CD4-positive, alpha-beta T cell (primary cell): ENCODE measurements at regions of chr1 and their contacts with region 1.

Region 1: GRCh38 chr1:18926315-18927081 is 24.1 kb upstream of the ALDH4A1 start:
- DNase-seq: peak; percentile 61 to 94 (median 80)
- ATAC-seq: peak; percentile 82
- H3K4me3 ChIP-seq: peak overlapping the region; percentile 49
- H3K4me3 Mint-ChIP-seq: peak overlapping the region; percentile 52
- H3K27ac ChIP-seq: peak overlapping the region; percentile 87 to 91
- H3K27ac Mint-ChIP-seq: peak overlapping the region; percentile 83
- H3K4me1 ChIP-seq: peaks cover 97% of the 10 kb centered on the region
- H3K4me1 Mint-ChIP-seq: peaks cover 93% of the 10 kb centered on the region
- H3K27me3 ChIP-seq: no peaks in the 10 kb centered on the region
- H3K27me3 Mint-ChIP-seq: no peaks in the 10 kb centered on the region
- CTCF ChIP-seq: no peak

Region 2: DNA sequence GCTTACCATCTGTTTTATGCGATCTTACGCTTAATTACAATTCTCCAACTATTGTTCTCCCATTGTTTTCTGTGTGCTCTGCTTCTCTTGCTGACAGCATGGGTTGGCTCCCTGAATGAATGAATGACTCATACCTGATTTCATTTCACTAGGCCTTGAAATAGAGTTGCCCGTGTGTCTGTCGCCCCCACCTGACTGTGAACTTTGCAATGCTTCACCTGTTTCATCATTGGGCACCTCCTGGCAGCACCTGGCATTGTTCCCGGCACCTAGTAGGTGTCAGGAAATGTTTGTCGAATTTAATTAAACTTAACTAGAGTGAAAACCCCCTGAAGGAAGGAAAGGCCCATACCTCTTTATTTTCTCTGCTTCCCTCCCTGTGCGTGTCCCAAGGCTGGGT is 566.2 kb before region 1 on chr1:
- CTCF ChIA-PET with region 1: no interaction called
- POLR2A ChIA-PET with region 1: no interaction called
- intact Hi-C with region 1: no loop called
- DNase-seq: no peak
- ATAC-seq: no peak
- H3K4me3 ChIP-seq: no peak overlapping the region
- H3K4me3 Mint-ChIP-seq: no peak overlapping the region
- H3K27ac ChIP-seq: no peak overlapping the region
- H3K27ac Mint-ChIP-seq: no peak overlapping the region
- H3K4me1 ChIP-seq: no peaks in the 10 kb centered on the region
- H3K4me1 Mint-ChIP-seq: no peaks in the 10 kb centered on the region
- H3K27me3 ChIP-seq: peaks cover 9 to 16% of the 10 kb centered on the region in 2 experiments
- H3K27me3 Mint-ChIP-seq: peaks cover 72% of the 10 kb centered on the region
- CTCF ChIP-seq: no peak

Region 3: DNA sequence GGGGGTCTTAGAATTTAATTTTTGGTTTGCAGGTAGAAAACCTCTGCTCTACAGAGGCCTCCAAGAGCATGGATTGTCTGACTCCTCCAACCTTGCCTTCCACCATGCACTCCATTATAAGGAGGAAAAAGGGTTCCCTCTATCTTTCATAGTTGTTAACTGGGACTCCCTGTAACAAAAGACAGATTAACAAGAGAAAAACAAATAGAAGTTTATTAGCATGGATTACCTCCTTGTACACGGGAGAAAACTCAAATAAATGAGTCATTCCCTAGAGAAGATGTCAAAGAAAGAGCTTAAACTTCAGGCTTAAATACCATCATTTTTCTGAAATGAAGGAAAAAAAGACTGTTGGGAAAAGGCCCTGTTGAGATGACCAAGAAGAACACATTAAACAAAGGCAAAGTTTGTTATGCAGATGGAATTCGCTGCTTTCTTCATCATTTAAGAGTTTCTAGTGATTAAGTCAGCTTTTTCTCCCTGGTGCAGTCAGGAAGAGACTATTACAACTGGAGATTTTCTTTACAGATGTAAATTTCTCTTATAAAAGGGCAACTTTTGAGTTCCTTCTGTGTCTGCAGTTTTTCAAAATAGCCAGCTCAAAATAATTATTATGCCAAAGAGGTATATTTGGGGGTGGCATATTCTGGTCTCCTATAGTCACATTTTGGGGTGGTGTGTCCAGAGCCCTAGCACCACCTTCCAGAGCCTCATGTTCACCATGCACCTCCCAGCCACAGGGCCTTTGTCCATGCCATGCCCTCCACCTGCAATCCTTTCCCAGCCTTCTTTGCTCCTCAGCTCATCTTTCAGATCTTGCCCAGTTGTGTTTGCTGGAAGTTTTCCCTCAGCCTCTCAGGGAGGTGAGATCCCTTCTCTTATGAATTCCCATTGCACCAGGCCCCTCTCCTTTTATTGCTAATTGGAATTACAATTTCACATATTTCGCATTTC is 508.9 kb before region 1 on chr1:
- CTCF ChIA-PET with region 1: no interaction called
- POLR2A ChIA-PET with region 1: no interaction called
- intact Hi-C with region 1: no loop called
- DNase-seq: no peak
- ATAC-seq: no peak
- H3K4me3 ChIP-seq: no peak overlapping the region
- H3K4me3 Mint-ChIP-seq: no peak overlapping the region
- H3K27ac ChIP-seq: no peak overlapping the region
- H3K27ac Mint-ChIP-seq: no peak overlapping the region
- H3K4me1 ChIP-seq: no peaks in the 10 kb centered on the region
- H3K4me1 Mint-ChIP-seq: no peaks in the 10 kb centered on the region
- H3K27me3 ChIP-seq: peaks cover 0 to 2% of the 10 kb centered on the region in 2 experiments
- H3K27me3 Mint-ChIP-seq: peaks cover 24% of the 10 kb centered on the region
- CTCF ChIP-seq: no peak

Region 4: GRCh38 chr1:18938008-18938706 is 11.7 kb after region 1 on chr1:
- CTCF ChIA-PET with region 1: interaction called, 8 read pairs
- POLR2A ChIA-PET with region 1: interaction called, 40 read pairs
- intact Hi-C with region 1: no loop called
- DNase-seq: no peak
- ATAC-seq: no peak
- H3K4me3 ChIP-seq: no peak overlapping the region
- H3K4me3 Mint-ChIP-seq: no peak overlapping the region
- H3K27ac ChIP-seq: peak overlapping the region; percentile 13 to 40
- H3K27ac Mint-ChIP-seq: peak overlapping the region; percentile 42
- H3K4me1 ChIP-seq: peaks cover 98% of the 10 kb centered on the region
- H3K4me1 Mint-ChIP-seq: peaks cover 80% of the 10 kb centered on the region
- H3K27me3 ChIP-seq: no peaks in the 10 kb centered on the region
- H3K27me3 Mint-ChIP-seq: no peaks in the 10 kb centered on the region
- CTCF ChIP-seq: no peak

Region 5: GRCh38 chr1:18949686-18950400 is 23.3 kb after region 1 on chr1:
- CTCF ChIA-PET with region 1: interaction called, 23 read pairs
- POLR2A ChIA-PET with region 1: interaction called, 150 read pairs
- intact Hi-C with region 1: loop called (anchors 1 to 2 kb)
- DNase-seq: peak in 3 of 14 experiments; percentile 30 to 57 (median 49)
- ATAC-seq: no peak
- H3K4me3 ChIP-seq: peak overlapping the region; percentile 50
- H3K4me3 Mint-ChIP-seq: peak overlapping the region; percentile 99
- H3K27ac ChIP-seq: peak overlapping the region; percentile 95
- H3K27ac Mint-ChIP-seq: peak overlapping the region; percentile 99
- H3K4me1 ChIP-seq: peaks cover 100% of the 10 kb centered on the region
- H3K4me1 Mint-ChIP-seq: peaks cover 97% of the 10 kb centered on the region
- H3K27me3 ChIP-seq: no peaks in the 10 kb centered on the region
- H3K27me3 Mint-ChIP-seq: no peaks in the 10 kb centered on the region
- CTCF ChIP-seq: no peak

Region 6: DNA sequence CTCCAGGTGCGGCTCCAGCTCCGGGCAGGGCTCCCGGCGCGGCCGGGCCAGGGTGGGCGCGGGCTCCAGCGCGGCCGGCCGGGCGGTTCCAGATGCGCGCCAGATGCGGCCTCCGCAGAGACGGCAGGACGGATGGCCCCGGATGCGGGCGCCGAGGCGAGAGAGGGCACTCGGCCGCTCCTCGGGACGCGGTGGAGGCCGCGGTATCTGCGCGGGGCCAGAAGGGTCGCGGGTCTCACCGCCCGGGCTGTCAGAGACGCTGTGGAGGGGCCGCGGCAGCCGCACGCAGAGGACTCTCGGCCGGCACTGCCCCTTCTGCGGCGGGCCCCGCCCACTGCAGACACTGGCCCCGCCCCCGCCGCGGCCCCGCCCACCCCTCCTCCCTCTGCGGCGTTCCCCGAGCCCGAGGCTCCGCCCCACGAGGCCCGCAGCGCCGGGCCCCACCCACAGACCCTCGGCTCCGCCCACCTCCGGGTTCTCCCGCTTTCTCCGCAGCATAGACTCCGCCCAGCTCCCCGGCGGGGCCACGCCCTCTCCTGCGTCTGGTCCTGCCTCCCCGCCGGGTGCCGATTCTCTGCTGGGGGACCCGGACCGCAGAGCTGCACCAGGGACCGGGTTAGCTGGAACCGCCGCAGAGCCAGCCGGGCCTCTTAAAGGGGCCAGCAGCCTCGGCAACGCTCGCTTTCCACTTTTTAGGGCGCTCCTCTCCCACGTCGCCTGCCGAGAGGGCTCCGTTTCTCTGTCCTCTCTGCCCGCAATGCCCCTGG is 30.1 kb after region 1 on chr1 and contains the start of gene IFFO2:
- CTCF ChIA-PET with region 1: interaction called, 23 read pairs
- POLR2A ChIA-PET with region 1: interaction called, 150 read pairs
- intact Hi-C with region 1: loop called (anchors 1 to 2 kb)
- DNase-seq: peak in 13 of 14 experiments; percentile 97 to 100 (median 98)
- ATAC-seq: peak; percentile 76
- H3K4me3 ChIP-seq: peak within 1 kb of the TSS; percentile 83
- H3K4me3 Mint-ChIP-seq: peak within 1 kb of the TSS; percentile 99
- H3K27ac ChIP-seq: peak within 1 kb of the TSS in 1 of 2 donors; percentile 74
- H3K27ac Mint-ChIP-seq: peak within 1 kb of the TSS; percentile 99
- H3K4me1 ChIP-seq: peaks cover 59% of the 10 kb centered on the region
- H3K4me1 Mint-ChIP-seq: peaks cover 65% of the 10 kb centered on the region
- H3K27me3 ChIP-seq: no peaks in the 10 kb centered on the region
- H3K27me3 Mint-ChIP-seq: no peaks in the 10 kb centered on the region
- CTCF ChIP-seq: no peak
- total RNA-seq, gene IFFO2: 106 to 112 TPM

Region 7: DNA sequence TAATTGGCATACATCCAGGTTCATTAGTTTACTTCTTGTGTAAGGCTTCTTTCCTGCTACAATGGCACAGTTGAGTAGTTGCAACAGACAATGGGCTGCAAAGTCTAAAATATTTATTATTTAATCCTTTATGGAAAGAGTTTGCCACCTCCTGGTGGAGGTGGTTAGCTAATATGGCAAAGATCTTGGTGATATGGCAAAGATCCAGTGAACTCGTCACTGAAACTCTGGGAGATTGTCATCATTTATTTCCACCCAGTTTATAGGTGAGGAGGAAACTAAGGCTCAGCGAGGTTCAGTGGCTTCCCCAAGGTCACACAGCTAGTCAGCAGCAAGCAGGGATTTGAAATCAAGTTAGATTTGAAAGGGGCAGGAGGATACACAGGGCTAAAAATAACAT is 46.0 kb after region 1 on chr1:
- CTCF ChIA-PET with region 1: interaction called, 10 read pairs
- POLR2A ChIA-PET with region 1: interaction called, 12 read pairs
- intact Hi-C with region 1: loop called in 1 of 2 experiments (anchors 1 kb)
- DNase-seq: peak in 5 of 14 experiments; percentile 23 to 73 (median 66)
- ATAC-seq: peak; percentile 59
- H3K4me3 ChIP-seq: no peak overlapping the region
- H3K4me3 Mint-ChIP-seq: no peak overlapping the region
- H3K27ac ChIP-seq: no peak overlapping the region
- H3K27ac Mint-ChIP-seq: no peak overlapping the region
- H3K4me1 ChIP-seq: peaks cover 3% of the 10 kb centered on the region
- H3K4me1 Mint-ChIP-seq: no peaks in the 10 kb centered on the region
- H3K27me3 ChIP-seq: no peaks in the 10 kb centered on the region
- H3K27me3 Mint-ChIP-seq: no peaks in the 10 kb centered on the region
- CTCF ChIP-seq: peak; percentile 72

Region 8: GRCh38 chr1:19074902-19075721 is 148.6 kb after region 1 on chr1:
- CTCF ChIA-PET with region 1: interaction called, 3 read pairs
- POLR2A ChIA-PET with region 1: interaction called, 24 read pairs
- intact Hi-C with region 1: loop called in 1 of 2 experiments (anchors 1 kb)
- DNase-seq: peak in 1 of 14 experiments; percentile 23
- ATAC-seq: peak; percentile 19
- H3K4me3 ChIP-seq: peak overlapping the region; percentile 25
- H3K4me3 Mint-ChIP-seq: peak overlapping the region; percentile 72
- H3K27ac ChIP-seq: no peak overlapping the region
- H3K27ac Mint-ChIP-seq: peak overlapping the region; percentile 83
- H3K4me1 ChIP-seq: peaks cover 58% of the 10 kb centered on the region
- H3K4me1 Mint-ChIP-seq: peaks cover 63% of the 10 kb centered on the region
- H3K27me3 ChIP-seq: no peaks in the 10 kb centered on the region
- H3K27me3 Mint-ChIP-seq: no peaks in the 10 kb centered on the region
- CTCF ChIP-seq: no peak